A673 (cell line): ENCODE measurements at regions of chr7 and their contacts with region 1.

Region 1: DNA sequence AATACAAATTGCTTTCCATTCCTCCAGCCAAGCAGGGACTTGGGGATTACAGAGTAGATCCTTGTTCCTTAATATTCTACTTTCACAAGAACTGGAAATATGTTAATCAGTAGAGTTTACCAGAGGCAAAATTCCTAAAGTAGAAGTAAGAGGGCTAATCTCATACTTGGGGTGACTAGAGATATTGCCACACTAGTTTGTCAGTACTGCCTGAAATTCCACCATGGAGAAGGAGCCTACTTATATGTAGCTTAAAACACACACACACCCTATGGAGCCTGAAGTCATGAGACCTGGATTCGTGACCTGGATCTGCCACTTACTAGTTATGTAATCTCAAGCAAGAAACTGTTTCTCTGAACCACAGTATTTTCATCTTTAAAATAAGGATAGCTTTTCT is 33.9 kb downstream of the STRIP2 start:
- DNase-seq: no peak
- H3K4me3 ChIP-seq: no peak overlapping the region
- H3K27ac ChIP-seq: peak overlapping the region; percentile 4
- H3K4me1 ChIP-seq: no peaks in the 10 kb centered on the region
- H3K27me3 ChIP-seq: no peaks in the 10 kb centered on the region
- CTCF ChIP-seq: no peak

Region 2: DNA sequence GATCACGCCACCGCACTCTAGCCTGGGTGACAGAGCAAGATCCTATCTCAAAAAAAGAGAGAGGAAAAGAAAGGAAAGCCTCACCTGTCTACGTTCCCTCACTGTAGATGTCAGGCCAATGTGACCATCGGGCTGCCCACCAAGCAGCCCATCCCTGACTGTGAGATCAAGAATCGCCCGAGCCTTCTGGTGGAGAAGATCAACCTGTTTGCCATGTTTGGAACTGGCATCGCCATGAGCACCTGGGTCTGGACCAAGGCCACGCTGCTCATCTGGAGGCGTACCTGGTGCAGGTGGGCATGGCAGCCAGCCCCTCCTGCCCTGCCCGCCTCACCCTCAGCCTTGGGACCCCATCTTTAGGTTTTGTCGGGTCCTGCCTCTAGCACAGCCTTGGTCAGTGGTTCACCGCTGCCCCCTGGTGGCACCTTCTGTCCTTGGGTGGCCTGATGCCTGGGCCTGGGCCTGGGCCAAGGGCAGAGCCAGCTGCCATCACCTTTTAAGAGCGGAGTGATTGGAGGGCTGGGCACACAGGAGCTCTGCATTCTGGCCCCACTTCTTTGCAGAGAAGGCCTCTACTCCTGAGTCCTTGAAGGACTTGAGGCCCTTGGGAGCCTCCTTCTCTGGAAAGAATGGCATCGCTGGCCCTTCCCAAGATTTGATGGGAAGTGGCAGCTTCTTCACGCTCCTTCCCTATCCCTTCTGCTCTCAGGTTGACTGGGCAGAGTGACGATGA is 257.7 kb before region 1 on chr7:
- CTCF ChIA-PET with region 1: no interaction called
- POLR2A ChIA-PET with region 1: no interaction called
- intact Hi-C with region 1: no loop called
- DNase-seq: peak; percentile 52
- H3K4me3 ChIP-seq: no peak overlapping the region
- H3K27ac ChIP-seq: no peak overlapping the region
- H3K4me1 ChIP-seq: no peaks in the 10 kb centered on the region
- H3K27me3 ChIP-seq: no peaks in the 10 kb centered on the region
- CTCF ChIP-seq: peak; percentile 86

Region 3: GRCh38 chr7:129644634-129645230 is 176.6 kb after region 1 on chr7:
- CTCF ChIA-PET with region 1: no interaction called
- POLR2A ChIA-PET with region 1: no interaction called
- intact Hi-C with region 1: loop called (anchors 10 kb)
- DNase-seq: peak; percentile 77
- H3K4me3 ChIP-seq: no peak overlapping the region
- H3K27ac ChIP-seq: no peak overlapping the region
- H3K4me1 ChIP-seq: peaks cover 32% of the 10 kb centered on the region
- H3K27me3 ChIP-seq: no peaks in the 10 kb centered on the region
- CTCF ChIP-seq: peak; percentile 61